ENCODE measurements at regions of chr12 and their contacts with region 1.

Region 1: DNA sequence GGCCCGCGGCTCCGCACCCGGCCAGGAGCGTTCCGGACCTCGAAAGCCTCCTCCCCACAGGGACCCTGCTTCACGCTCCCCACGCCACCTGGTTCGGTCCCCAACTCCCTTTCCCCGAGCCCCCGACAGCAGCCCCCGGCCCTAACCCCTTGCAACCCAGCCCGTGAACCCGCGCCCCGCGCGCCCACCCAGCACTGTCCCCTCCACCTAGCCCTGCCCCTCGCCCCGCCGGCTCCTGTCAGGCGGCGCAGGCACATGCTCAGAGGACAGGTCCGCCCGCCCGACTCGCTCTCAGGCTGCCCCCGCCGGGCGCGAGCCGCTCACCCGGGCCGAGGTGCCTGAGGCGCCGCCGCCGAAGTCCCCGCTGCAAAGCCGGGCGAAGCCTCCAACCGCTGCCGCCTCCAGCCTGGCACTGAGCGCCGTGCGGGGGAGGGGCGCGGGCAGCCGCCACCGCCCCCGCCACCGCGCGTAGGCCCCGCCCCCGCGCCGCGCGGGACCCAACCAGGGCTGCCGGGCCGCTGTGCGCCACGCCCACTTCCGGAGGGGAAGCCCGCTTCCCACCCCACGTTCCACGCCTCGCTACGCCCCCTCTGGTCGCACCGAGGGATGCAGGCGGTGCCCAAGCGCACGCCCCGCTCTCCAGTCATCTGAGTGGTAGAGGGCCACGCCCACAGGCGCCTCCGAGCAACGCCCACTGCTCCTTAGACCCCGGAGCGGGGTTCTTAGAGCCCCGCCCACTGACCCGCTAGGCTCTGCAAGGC is at the start of gene CORO1C:
- DNase-seq: peak in 1 of 2 donors; percentile 97
- H3K4me3 ChIP-seq: peak within 1 kb of the TSS; percentile 88 to 92
- H3K27ac ChIP-seq: peak within 1 kb of the TSS; percentile 98
- H3K4me1 ChIP-seq: peaks cover 45% of the 10 kb centered on the region
- H3K27me3 ChIP-seq: no peaks in the 10 kb centered on the region
- CTCF ChIP-seq: peak; percentile 36 to 79 (median 58)
- POLR2A ChIP-seq: peak; percentile 81 to 98
- total RNA-seq, gene CORO1C: 189 TPM

Region 2: DNA sequence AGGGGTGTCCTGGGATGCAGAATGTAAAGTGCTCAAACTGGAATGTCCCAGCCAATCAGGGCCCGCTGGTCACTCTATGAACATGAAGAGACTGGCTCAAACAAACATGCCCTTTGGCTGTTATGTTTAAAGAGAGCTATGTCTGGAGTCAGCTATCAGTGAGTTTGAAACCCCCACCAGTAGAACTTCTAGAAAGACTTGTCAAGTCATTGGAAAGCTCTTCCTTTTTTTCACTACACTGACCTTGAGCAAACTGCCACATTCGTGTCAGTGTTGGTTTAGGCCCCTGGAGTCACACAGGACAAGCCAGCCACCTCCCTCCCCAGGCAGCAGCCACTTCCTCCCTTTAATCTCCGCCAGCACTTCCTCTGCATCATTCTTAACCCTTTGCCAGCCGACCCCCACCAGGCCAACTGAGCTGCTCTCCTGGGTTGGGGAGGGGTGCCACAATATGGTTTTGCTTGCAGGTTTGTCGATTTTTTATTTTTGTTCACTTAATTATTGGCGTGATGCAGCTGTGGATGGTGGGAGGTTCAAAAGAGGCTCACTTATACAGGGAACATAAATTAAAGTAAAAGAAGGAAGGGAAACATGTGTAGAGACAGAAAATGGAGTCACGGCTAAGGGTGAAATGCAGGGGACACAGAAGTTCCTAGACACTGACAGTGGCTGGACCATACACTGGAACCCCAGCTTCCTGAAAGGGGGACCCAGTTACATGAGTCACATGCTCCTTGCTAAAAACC is 417.5 kb before region 1 on chr12:
- intact Hi-C with region 1: no loop called
- DNase-seq: no peak
- H3K4me3 ChIP-seq: no peak overlapping the region
- H3K27ac ChIP-seq: peak overlapping the region; percentile 9
- H3K4me1 ChIP-seq: peaks cover 20% of the 10 kb centered on the region
- H3K27me3 ChIP-seq: no peaks in the 10 kb centered on the region
- CTCF ChIP-seq: no peak
- POLR2A ChIP-seq: no peak

Region 3: GRCh38 chr12:108562348-108563135 is 168.7 kb before region 1 on chr12 and contains the start of gene ISCU:
- intact Hi-C with region 1: no loop called
- DNase-seq: peak; percentile 97 to 98
- H3K4me3 ChIP-seq: peak within 1 kb of the TSS; percentile 64 to 94
- H3K27ac ChIP-seq: peak within 1 kb of the TSS; percentile 94
- H3K4me1 ChIP-seq: peaks cover 67% of the 10 kb centered on the region
- H3K27me3 ChIP-seq: no peaks in the 10 kb centered on the region
- CTCF ChIP-seq: no peak
- POLR2A ChIP-seq: peak in 1 of 2 donors; percentile 91
- total RNA-seq, gene ISCU: 167 TPM

Region 4: GRCh38 chr12:108633534-108634248 is 97.6 kb before region 1 on chr12 and contains the start of gene SELPLG:
- intact Hi-C with region 1: no loop called
- DNase-seq: peak in 1 of 2 donors; percentile 70
- H3K4me3 ChIP-seq: peak within 1 kb of the TSS in 1 of 2 donors; percentile 16
- H3K27ac ChIP-seq: peak within 1 kb of the TSS; percentile 40
- H3K4me1 ChIP-seq: peaks cover 40% of the 10 kb centered on the region
- H3K27me3 ChIP-seq: no peaks in the 10 kb centered on the region
- CTCF ChIP-seq: no peak
- POLR2A ChIP-seq: peak in 1 of 2 donors; percentile 13
- total RNA-seq, gene SELPLG: 14.2 TPM

Region 5: DNA sequence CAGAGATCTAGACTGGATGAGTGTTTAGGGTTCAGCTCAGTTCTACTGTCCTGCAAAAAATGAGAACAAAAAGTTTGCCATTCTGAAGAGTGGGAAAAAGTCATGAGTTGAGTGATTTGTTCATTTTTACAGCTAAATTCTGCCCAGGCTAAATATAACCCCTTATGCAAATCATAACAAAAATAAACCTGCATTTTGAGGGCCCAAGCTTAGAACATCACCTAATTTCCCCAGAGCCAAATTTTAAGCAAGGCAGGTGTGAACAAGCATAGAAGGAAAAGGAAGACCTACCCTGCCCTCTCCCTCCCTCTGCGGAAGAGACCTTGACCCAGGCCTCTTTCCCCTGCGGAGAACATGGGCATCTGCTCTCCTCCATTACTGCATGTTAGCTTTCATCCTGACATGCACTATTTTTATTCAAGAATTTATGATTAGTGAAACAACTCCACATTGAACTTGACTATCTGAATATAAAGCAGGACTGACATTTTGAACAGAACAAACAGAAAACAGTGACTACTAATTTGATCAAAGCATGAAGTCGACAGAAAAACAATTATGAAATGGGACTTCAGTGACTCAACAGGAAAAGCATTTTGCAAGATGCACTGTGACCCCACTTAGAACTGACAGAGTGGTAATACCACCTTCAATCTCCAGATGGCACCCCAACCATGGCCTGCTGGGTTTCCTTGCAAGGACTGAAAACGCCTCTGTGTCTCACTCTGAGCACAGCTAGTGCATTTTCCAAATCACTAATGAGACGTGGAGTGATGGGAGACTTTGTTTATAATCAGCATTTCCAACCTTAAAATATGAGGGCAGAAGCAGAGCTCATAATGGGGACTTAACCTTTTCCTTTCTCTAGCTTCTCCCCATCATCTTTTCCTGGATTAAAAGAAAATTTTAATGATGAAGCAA is 66.7 kb before region 1 on chr12:
- intact Hi-C with region 1: loop called (anchors 5 kb)
- DNase-seq: no peak
- H3K4me3 ChIP-seq: no peak overlapping the region
- H3K27ac ChIP-seq: peak overlapping the region; percentile 89
- H3K4me1 ChIP-seq: peaks cover 58% of the 10 kb centered on the region
- H3K27me3 ChIP-seq: no peaks in the 10 kb centered on the region
- CTCF ChIP-seq: peak; percentile 75 to 98 (median 87)
- POLR2A ChIP-seq: no peak

Region 6: GRCh38 chr12:108784270-108784669 is 53.0 kb after region 1 on chr12:
- intact Hi-C with region 1: loop called (anchors 5 kb)
- DNase-seq: no peak
- H3K4me3 ChIP-seq: no peak overlapping the region
- H3K27ac ChIP-seq: no peak overlapping the region
- H3K4me1 ChIP-seq: no peaks in the 10 kb centered on the region
- H3K27me3 ChIP-seq: no peaks in the 10 kb centered on the region
- CTCF ChIP-seq: no peak
- POLR2A ChIP-seq: no peak

Region 7: DNA sequence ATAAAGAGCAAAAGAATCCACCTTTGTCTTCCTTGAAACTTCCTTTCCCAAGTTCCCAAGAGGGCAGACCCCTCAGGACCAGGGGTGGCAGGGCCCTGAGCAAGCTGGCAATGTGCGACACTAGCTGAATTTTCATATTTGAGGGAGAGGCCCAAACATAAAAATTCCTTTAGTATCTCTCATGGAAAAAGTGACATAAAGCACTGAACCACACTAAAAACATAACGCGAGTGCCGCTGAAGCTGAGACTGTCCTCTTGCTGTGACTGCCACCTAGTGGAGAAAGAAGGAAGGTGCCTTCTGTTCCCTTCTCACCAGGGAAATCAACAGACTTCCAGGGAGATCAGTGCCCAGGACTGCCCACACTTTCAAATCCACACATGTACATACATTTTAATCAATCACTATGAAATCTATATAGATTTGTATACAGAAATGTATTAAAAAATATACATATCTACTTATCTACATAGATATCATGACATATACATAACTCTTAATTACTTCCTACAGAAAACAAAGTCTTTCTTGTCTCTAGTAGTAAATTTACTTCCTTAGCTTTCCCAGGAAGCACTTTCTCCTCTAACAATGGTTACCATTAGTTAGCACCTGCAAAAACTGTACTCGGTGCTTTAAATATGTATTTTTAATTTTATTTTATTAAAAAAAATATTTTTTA is 72.3 kb after region 1 on chr12:
- intact Hi-C with region 1: loop called (anchors 2 kb)
- DNase-seq: no peak
- H3K4me3 ChIP-seq: no peak overlapping the region
- H3K27ac ChIP-seq: peak overlapping the region; percentile 89
- H3K4me1 ChIP-seq: peaks cover 48% of the 10 kb centered on the region
- H3K27me3 ChIP-seq: no peaks in the 10 kb centered on the region
- CTCF ChIP-seq: peak; percentile 88 to 98 (median 97)
- POLR2A ChIP-seq: no peak

Region 8: GRCh38 chr12:109393437-109394345 is 662.4 kb after region 1 on chr12:
- intact Hi-C with region 1: no loop called
- DNase-seq: no peak
- H3K4me3 ChIP-seq: no peak overlapping the region
- H3K27ac ChIP-seq: no peak overlapping the region
- H3K4me1 ChIP-seq: no peaks in the 10 kb centered on the region
- H3K27me3 ChIP-seq: no peaks in the 10 kb centered on the region
- CTCF ChIP-seq: peak; percentile 38 to 54 (median 47)
- POLR2A ChIP-seq: no peak